OCI-LY7 (cell line): ENCODE measurements at regions of chr6 and their contacts with region 1.

Region 1: GRCh38 chr6:129598244-129599187 is 111.5 kb downstream of the ARHGAP18 start:
- DNase-seq: peak; percentile 77
- H3K4me3 ChIP-seq: no peak overlapping the region
- H3K27ac ChIP-seq: no peak overlapping the region
- H3K4me1 ChIP-seq: peaks cover 12% of the 10 kb centered on the region
- CTCF ChIP-seq: peak; percentile 98

Region 2: GRCh38 chr6:129475477-129476247 is 122.9 kb before region 1 on chr6:
- CTCF ChIA-PET with region 1: no interaction called
- POLR2A ChIA-PET with region 1: no interaction called
- intact Hi-C with region 1: no loop called
- DNase-seq: no peak
- H3K4me3 ChIP-seq: no peak overlapping the region
- H3K27ac ChIP-seq: no peak overlapping the region
- H3K4me1 ChIP-seq: no peaks in the 10 kb centered on the region
- CTCF ChIP-seq: no peak

Region 3: DNA sequence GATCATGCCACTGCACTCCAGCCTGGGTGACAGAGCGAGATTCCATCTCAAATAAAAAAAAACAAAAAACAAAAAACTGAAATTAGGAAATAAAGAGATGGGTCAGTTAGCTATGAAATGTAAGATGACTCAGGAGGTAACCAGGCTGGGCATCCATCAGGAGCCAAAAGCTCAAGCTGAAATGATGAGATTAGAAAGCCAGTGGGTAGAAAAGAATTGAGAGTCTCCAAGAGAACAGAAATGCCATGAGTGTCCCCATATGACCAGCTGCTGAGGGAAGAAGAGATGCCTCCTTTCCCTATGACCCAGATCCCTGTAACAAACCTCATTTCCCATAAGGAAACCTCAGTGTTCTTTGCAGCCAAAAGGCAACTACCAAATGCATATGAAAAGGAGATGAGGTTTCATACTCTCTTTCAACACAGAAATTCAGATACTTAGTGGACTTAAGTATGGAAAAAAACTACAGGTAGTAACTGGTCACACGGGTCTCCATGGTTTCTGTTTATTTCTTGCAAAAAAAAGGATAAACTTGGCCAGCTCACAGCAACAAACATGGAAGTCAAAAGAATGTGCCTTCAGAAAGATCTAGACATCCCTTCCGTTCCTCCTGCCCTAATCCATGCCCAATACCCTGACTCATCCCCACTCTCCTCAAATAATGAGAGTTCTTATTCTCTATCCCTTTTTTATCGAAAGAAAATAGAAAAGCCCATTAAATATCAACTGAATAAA is 103.4 kb after region 1 on chr6:
- CTCF ChIA-PET with region 1: no interaction called
- POLR2A ChIA-PET with region 1: no interaction called
- intact Hi-C with region 1: no loop called
- DNase-seq: no peak
- H3K4me3 ChIP-seq: no peak overlapping the region
- H3K27ac ChIP-seq: no peak overlapping the region
- H3K4me1 ChIP-seq: no peaks in the 10 kb centered on the region
- CTCF ChIP-seq: no peak

Region 4: GRCh38 chr6:129730477-129731165 is 132.1 kb after region 1 on chr6:
- CTCF ChIA-PET with region 1: interaction called, 16 read pairs
- POLR2A ChIA-PET with region 1: interaction called, 17 read pairs
- intact Hi-C with region 1: loop called (anchors 1 kb)
- DNase-seq: peak; percentile 64
- H3K4me3 ChIP-seq: no peak overlapping the region
- H3K27ac ChIP-seq: no peak overlapping the region
- H3K4me1 ChIP-seq: no peaks in the 10 kb centered on the region
- CTCF ChIP-seq: peak; percentile 95

Region 5: GRCh38 chr6:129748212-129748900 is 149.8 kb after region 1 on chr6:
- CTCF ChIA-PET with region 1: interaction called, 5 read pairs
- POLR2A ChIA-PET with region 1: interaction called, 11 read pairs
- intact Hi-C with region 1: no loop called
- DNase-seq: peak; percentile 88
- H3K4me3 ChIP-seq: peak overlapping the region; percentile 46
- H3K27ac ChIP-seq: peak overlapping the region; percentile 56
- H3K4me1 ChIP-seq: peaks cover 54% of the 10 kb centered on the region
- CTCF ChIP-seq: no peak

Region 6: GRCh38 chr6:129936329-129937165 is 338.0 kb after region 1 on chr6:
- CTCF ChIA-PET with region 1: no interaction called
- POLR2A ChIA-PET with region 1: no interaction called
- intact Hi-C with region 1: loop called (anchors 5 kb)
- DNase-seq: peak; percentile 61
- H3K4me3 ChIP-seq: no peak overlapping the region
- H3K27ac ChIP-seq: no peak overlapping the region
- H3K4me1 ChIP-seq: no peaks in the 10 kb centered on the region
- CTCF ChIP-seq: peak; percentile 97

Region 7: DNA sequence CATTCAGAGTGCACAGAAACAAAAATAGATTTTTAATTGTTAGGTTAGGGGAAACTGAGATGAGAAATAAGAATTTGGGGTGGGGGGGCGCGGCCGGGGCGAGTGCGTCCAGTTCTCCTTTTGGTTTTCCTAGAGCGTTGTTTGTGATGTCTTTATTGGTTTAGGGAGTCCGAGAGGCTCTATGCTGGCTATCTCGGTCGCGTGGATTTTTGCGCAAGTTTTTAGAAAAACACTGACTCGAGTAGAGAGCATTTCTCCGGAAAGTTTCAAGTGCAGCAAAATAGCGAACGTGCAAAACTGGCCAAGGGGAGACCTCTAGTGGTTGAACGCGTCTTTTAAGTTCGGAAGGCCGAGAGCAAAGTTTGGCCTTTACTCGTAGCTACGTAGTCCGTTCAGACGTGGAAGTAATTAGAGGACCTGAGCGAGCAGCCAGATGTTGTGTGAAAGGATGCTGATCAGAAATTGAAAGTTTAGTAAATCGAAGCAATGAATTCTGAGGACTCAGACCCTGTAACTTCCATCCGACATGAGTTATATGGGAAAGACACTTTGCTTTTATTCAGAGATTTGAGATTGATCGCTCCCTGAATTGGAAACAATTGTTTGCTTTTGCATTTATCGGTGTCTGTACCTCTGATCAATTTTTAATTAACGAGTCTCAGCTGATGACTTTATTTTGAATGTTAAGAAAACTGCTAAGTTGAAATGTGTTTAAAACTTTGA is 422.6 kb after region 1 on chr6:
- CTCF ChIA-PET with region 1: no interaction called
- POLR2A ChIA-PET with region 1: no interaction called
- intact Hi-C with region 1: loop called (anchors 2 kb)
- DNase-seq: peak; percentile 86
- H3K4me3 ChIP-seq: peak overlapping the region; percentile 71
- H3K27ac ChIP-seq: peak overlapping the region; percentile 13
- H3K4me1 ChIP-seq: peaks cover 9% of the 10 kb centered on the region
- CTCF ChIP-seq: peak; percentile 89